CD4-positive, alpha-beta memory T cell (primary cell): ENCODE measurements at regions of chr6 and their contacts with region 1.

Region 1: DNA sequence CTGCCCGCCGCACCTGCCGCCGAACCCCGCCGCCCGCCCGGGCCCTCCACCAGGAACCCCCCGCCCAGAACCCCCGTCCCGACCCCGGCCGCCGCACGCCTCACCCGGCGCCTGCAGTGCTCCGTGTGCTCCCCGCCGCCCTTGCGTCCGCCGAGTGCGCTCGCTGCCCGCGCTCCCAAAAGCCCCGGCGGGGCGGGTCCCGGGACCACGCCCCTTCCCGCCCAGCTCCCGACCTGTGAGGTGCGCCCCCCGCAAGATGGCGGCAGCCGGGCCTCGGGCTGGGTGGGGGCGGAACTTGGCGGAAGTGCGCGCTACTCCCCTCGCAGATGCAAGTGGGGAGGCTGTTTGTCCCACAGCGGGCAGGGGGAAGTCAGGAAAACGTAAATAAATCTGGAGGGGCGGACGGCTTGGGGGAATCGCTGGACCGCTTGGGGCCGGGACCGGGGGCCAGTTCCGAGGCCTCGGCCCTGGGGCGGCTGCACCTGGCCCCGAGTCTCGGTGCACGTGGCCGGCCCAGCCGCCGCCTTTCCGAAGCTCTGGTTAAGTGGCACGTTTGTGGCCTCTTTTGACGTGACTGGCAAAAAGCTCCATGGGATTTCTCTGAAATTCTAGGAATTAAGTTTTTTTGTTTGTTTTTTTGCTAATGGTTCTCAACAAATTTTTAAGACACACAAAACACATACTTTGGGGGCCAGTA is at the start of gene EZR:
- DNase-seq: peak; percentile 82 to 86 (median 84)
- H3K4me3 ChIP-seq: peak within 1 kb of the TSS in 1 of 2 donors; percentile 77
- H3K4me3 Mint-ChIP-seq: peak within 1 kb of the TSS; percentile 79 to 98 (median 84)
- H3K27ac ChIP-seq: peak within 1 kb of the TSS; percentile 86
- H3K27ac Mint-ChIP-seq: peak within 1 kb of the TSS; percentile 84 to 100 (median 96)
- H3K4me1 ChIP-seq: peaks cover 31% of the 10 kb centered on the region
- H3K4me1 Mint-ChIP-seq: peaks cover 23 to 58% (median 27%) of the 10 kb centered on the region in 4 donors
- H3K27me3 ChIP-seq: no peaks in the 10 kb centered on the region
- H3K27me3 Mint-ChIP-seq: no peaks in the 10 kb centered on the region
- total RNA-seq, gene EZR: 264 to 277 TPM

Region 2: DNA sequence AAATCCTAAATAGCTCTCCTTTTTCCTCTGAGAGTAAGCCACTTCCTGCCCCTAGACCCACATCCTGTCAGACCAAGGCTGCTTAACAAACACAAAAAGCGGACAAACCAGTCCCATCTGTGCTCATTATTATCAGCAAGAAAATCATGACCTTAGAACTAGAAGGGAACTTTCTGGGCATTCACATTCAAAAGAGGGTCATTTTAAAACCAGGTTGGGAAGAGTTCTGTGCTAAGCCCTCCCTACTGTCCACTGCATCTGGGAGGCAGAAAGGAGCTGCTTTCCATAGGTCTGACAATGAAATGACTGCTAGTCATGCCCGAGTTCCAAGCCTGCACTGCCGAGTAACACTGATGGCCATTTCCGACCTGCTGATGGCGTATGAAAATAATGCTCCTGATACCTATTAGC is 15.6 kb before region 1 on chr6:
- CTCF ChIA-PET with region 1: interaction called, 3 read pairs
- POLR2A ChIA-PET with region 1: interaction called, 119 read pairs
- intact Hi-C with region 1: loop called (anchors 1 kb)
- DNase-seq: peak; percentile 68 to 78 (median 73)
- H3K4me3 ChIP-seq: peak overlapping the region; percentile 15 to 49
- H3K4me3 Mint-ChIP-seq: peak overlapping the region; percentile 71 to 90 (median 86)
- H3K27ac ChIP-seq: peak overlapping the region; percentile 52
- H3K27ac Mint-ChIP-seq: peak overlapping the region; percentile 85 to 96 (median 92)
- H3K4me1 ChIP-seq: peaks cover 98% of the 10 kb centered on the region
- H3K4me1 Mint-ChIP-seq: peaks cover 76 to 98% (median 86%) of the 10 kb centered on the region in 4 donors
- H3K27me3 ChIP-seq: no peaks in the 10 kb centered on the region
- H3K27me3 Mint-ChIP-seq: no peaks in the 10 kb centered on the region

Region 3: GRCh38 chr6:158808941-158809678 is 10.3 kb before region 1 on chr6:
- CTCF ChIA-PET with region 1: interaction called, 3 read pairs
- POLR2A ChIA-PET with region 1: interaction called, 119 read pairs
- intact Hi-C with region 1: loop called (anchors 1 kb)
- DNase-seq: peak; percentile 56 to 72 (median 71)
- H3K4me3 ChIP-seq: peak overlapping the region in 1 of 2 donors; percentile 10
- H3K4me3 Mint-ChIP-seq: peak overlapping the region; percentile 45 to 80 (median 64)
- H3K27ac ChIP-seq: peak overlapping the region; percentile 3
- H3K27ac Mint-ChIP-seq: peak overlapping the region; percentile 81 to 96 (median 88)
- H3K4me1 ChIP-seq: peaks cover 100% of the 10 kb centered on the region
- H3K4me1 Mint-ChIP-seq: peaks cover 86 to 99% (median 92%) of the 10 kb centered on the region in 4 donors
- H3K27me3 ChIP-seq: no peaks in the 10 kb centered on the region
- H3K27me3 Mint-ChIP-seq: no peaks in the 10 kb centered on the region

Region 4: DNA sequence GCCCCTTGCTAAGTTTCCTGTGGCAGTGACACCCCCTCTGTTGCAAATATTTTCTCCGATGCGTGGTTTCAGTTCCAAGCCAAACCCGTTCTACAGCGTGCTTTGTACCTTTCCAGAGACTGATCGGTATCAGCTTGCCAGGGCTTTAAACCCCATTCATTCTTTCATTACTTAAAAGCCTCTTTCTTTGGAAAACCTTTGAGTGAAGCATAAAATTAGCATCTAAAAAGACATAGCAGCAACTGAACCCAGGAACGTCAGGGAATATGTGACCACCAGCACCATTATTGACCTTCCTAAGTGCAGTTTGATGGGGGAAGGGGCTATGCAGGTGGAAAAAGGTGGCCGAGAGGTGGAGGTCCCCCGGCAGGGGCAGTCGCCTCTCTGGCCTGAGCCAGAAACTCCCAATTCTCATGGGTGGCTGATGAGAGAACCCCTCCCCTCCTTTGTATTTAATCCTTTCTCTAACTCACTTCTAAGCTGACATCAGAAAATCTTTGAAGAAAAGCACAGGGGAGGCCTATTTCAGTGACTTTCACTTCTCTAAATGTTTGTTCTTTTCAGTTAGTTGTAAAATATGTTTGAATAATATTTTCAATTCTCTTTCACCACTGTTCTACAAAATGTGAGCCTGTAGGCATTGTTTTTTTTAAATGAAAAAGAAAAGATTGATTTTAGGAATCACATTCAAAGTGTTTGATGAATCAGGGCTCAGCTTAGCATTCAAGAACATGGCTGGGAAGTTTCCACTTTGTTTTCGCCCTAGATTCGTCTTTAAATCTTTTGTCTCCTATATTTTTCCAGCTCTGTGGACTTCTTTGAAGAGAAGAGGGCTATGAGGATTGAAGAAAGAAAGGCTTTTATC is 91.4 kb after region 1 on chr6:
- CTCF ChIA-PET with region 1: no interaction called
- POLR2A ChIA-PET with region 1: interaction called, 14 read pairs
- intact Hi-C with region 1: loop called (anchors 2 kb)
- DNase-seq: peak in 2 of 5 donors; percentile 10 to 21
- H3K4me3 ChIP-seq: peak overlapping the region in 1 of 2 donors; percentile 21
- H3K4me3 Mint-ChIP-seq: peak overlapping the region; percentile 35 to 91 (median 66)
- H3K27ac ChIP-seq: no peak overlapping the region
- H3K27ac Mint-ChIP-seq: peak overlapping the region in 6 of 7 donors; percentile 23 to 83 (median 62)
- H3K4me1 ChIP-seq: peaks cover 33% of the 10 kb centered on the region
- H3K4me1 Mint-ChIP-seq: peaks cover 21 to 55% (median 31%) of the 10 kb centered on the region in 4 donors
- H3K27me3 ChIP-seq: no peaks in the 10 kb centered on the region
- H3K27me3 Mint-ChIP-seq: peaks cover 0 to 1% of the 10 kb centered on the region in 2 donors

Region 5: GRCh38 chr6:158920311-158920915 is 101.1 kb after region 1 on chr6:
- CTCF ChIA-PET with region 1: no interaction called
- POLR2A ChIA-PET with region 1: interaction called, 10 read pairs
- intact Hi-C with region 1: no loop called
- DNase-seq: no peak
- H3K4me3 ChIP-seq: no peak overlapping the region
- H3K4me3 Mint-ChIP-seq: no peak overlapping the region
- H3K27ac ChIP-seq: no peak overlapping the region
- H3K27ac Mint-ChIP-seq: peak overlapping the region in 4 of 7 donors; percentile 23 to 50 (median 34)
- H3K4me1 ChIP-seq: peaks cover 20% of the 10 kb centered on the region
- H3K4me1 Mint-ChIP-seq: peaks cover 7 to 25% (median 17%) of the 10 kb centered on the region in 4 donors
- H3K27me3 ChIP-seq: no peaks in the 10 kb centered on the region
- H3K27me3 Mint-ChIP-seq: no peaks in the 10 kb centered on the region

Region 6: GRCh38 chr6:159125014-159125609 is 305.8 kb after region 1 on chr6:
- CTCF ChIA-PET with region 1: no interaction called
- POLR2A ChIA-PET with region 1: no interaction called
- intact Hi-C with region 1: no loop called
- DNase-seq: no peak
- H3K4me3 ChIP-seq: no peak overlapping the region
- H3K4me3 Mint-ChIP-seq: no peak overlapping the region
- H3K27ac ChIP-seq: no peak overlapping the region
- H3K27ac Mint-ChIP-seq: no peak overlapping the region
- H3K4me1 ChIP-seq: no peaks in the 10 kb centered on the region
- H3K4me1 Mint-ChIP-seq: no peaks in the 10 kb centered on the region
- H3K27me3 ChIP-seq: no peaks in the 10 kb centered on the region
- H3K27me3 Mint-ChIP-seq: peaks cover 0 to 1% of the 10 kb centered on the region in 2 donors